Naive thymus-derived CD4-positive, alpha-beta T cell (primary cell): ENCODE measurements at regions of chr7 and their contacts with region 1.

Region 1: GRCh38 chr7:93231799-93232672 is at the start of gene VPS50:
- DNase-seq: peak; percentile 74 to 97 (median 96)
- ATAC-seq: peak; percentile 98
- H3K4me3 ChIP-seq: peak within 1 kb of the TSS; percentile 93
- H3K4me3 Mint-ChIP-seq: peak within 1 kb of the TSS; percentile 91 to 99 (median 97)
- H3K27ac ChIP-seq: peak within 1 kb of the TSS; percentile 89
- H3K27ac Mint-ChIP-seq: peak within 1 kb of the TSS; percentile 93 to 99 (median 98)
- H3K4me1 ChIP-seq: peaks cover 6% of the 10 kb centered on the region in 2 donors
- H3K4me1 Mint-ChIP-seq: peaks cover 5 to 38% (median 21%) of the 10 kb centered on the region in 7 donors
- H3K27me3 ChIP-seq: no peaks in the 10 kb centered on the region
- H3K27me3 Mint-ChIP-seq: peaks cover 0 to 12% (median 0%) of the 10 kb centered on the region in 5 donors
- total RNA-seq, gene VPS50: 19.8 to 44.2 (median 36.8) TPM

Region 2: GRCh38 chr7:91940572-91941341 is 1291.3 kb before region 1 on chr7 and contains the start of gene AKAP9:
- CTCF ChIA-PET with region 1: no interaction called
- POLR2A ChIA-PET with region 1: interaction called, 8 read pairs
- intact Hi-C with region 1: loop called (anchors 2 to 10 kb)
- DNase-seq: peak; percentile 79 to 89 (median 88)
- ATAC-seq: peak; percentile 93
- H3K4me3 ChIP-seq: peak within 1 kb of the TSS; percentile 97
- H3K4me3 Mint-ChIP-seq: peak within 1 kb of the TSS; percentile 85 to 98 (median 92)
- H3K27ac ChIP-seq: peak within 1 kb of the TSS; percentile 93
- H3K27ac Mint-ChIP-seq: peak within 1 kb of the TSS; percentile 90 to 98 (median 95)
- H3K4me1 ChIP-seq: peaks cover 15 to 16% of the 10 kb centered on the region in 2 donors
- H3K4me1 Mint-ChIP-seq: peaks cover 28 to 54% (median 44%) of the 10 kb centered on the region in 7 donors
- H3K27me3 ChIP-seq: no peaks in the 10 kb centered on the region
- H3K27me3 Mint-ChIP-seq: peaks cover 0 to 2% (median 0%) of the 10 kb centered on the region in 5 donors
- total RNA-seq, gene AKAP9: 50.0 to 93.5 (median 66.1) TPM

Region 3: GRCh38 chr7:92447345-92448204 is 784.5 kb before region 1 on chr7 and contains the start of gene GATAD1:
- CTCF ChIA-PET with region 1: no interaction called
- POLR2A ChIA-PET with region 1: interaction called, 3 read pairs
- intact Hi-C with region 1: loop called (anchors 1 to 5 kb)
- DNase-seq: peak in 7 of 9 donors; percentile 64 to 87 (median 84)
- ATAC-seq: peak; percentile 89
- H3K4me3 ChIP-seq: peak within 1 kb of the TSS; percentile 63
- H3K4me3 Mint-ChIP-seq: peak within 1 kb of the TSS; percentile 81 to 97 (median 93)
- H3K27ac ChIP-seq: peak within 1 kb of the TSS; percentile 95
- H3K27ac Mint-ChIP-seq: peak within 1 kb of the TSS; percentile 95 to 99 (median 98)
- H3K4me1 ChIP-seq: peaks cover 9 to 14% of the 10 kb centered on the region in 2 donors
- H3K4me1 Mint-ChIP-seq: peaks cover 6 to 38% (median 17%) of the 10 kb centered on the region in 7 donors
- H3K27me3 ChIP-seq: no peaks in the 10 kb centered on the region
- H3K27me3 Mint-ChIP-seq: peaks cover 0 to 3% (median 0%) of the 10 kb centered on the region in 5 donors
- total RNA-seq, gene GATAD1: 16.4 to 34.7 (median 22.7) TPM

Region 4: GRCh38 chr7:92691578-92691977 is 540.5 kb before region 1 on chr7:
- CTCF ChIA-PET with region 1: no interaction called
- POLR2A ChIA-PET with region 1: no interaction called
- intact Hi-C with region 1: loop called (anchors 2 to 5 kb)
- DNase-seq: peak in 7 of 9 donors; percentile 33 to 59 (median 41)
- ATAC-seq: peak; percentile 93
- H3K4me3 ChIP-seq: no peak overlapping the region
- H3K4me3 Mint-ChIP-seq: peak overlapping the region in 4 of 10 donors; percentile 18 to 50 (median 20)
- H3K27ac ChIP-seq: no peak overlapping the region
- H3K27ac Mint-ChIP-seq: peak overlapping the region in 8 of 9 donors; percentile 1 to 75 (median 58)
- H3K4me1 ChIP-seq: peaks cover 12 to 15% of the 10 kb centered on the region in 2 donors
- H3K4me1 Mint-ChIP-seq: peaks cover 7 to 74% (median 38%) of the 10 kb centered on the region in 7 donors
- H3K27me3 ChIP-seq: no peaks in the 10 kb centered on the region
- H3K27me3 Mint-ChIP-seq: no peaks in the 10 kb centered on the region

Region 5: GRCh38 chr7:93117852-93118530 is 114.0 kb before region 1 on chr7 and contains the start of gene SAMD9:
- CTCF ChIA-PET with region 1: interaction called, 10 read pairs
- POLR2A ChIA-PET with region 1: interaction called, 14 read pairs
- intact Hi-C with region 1: loop called (anchors 1 kb)
- DNase-seq: peak in 8 of 9 donors; percentile 28 to 85 (median 78)
- ATAC-seq: peak; percentile 99
- H3K4me3 ChIP-seq: peak within 1 kb of the TSS; percentile 52
- H3K4me3 Mint-ChIP-seq: peak within 1 kb of the TSS; percentile 78 to 97 (median 92)
- H3K27ac ChIP-seq: peak within 1 kb of the TSS; percentile 82
- H3K27ac Mint-ChIP-seq: peak within 1 kb of the TSS; percentile 85 to 98 (median 93)
- H3K4me1 ChIP-seq: peaks cover 12 to 20% of the 10 kb centered on the region in 2 donors
- H3K4me1 Mint-ChIP-seq: peaks cover 38 to 56% (median 48%) of the 10 kb centered on the region in 7 donors
- H3K27me3 ChIP-seq: no peaks in the 10 kb centered on the region
- H3K27me3 Mint-ChIP-seq: no peaks in the 10 kb centered on the region
- total RNA-seq, gene SAMD9: 20.9 to 61.6 (median 47.8) TPM

Region 6: DNA sequence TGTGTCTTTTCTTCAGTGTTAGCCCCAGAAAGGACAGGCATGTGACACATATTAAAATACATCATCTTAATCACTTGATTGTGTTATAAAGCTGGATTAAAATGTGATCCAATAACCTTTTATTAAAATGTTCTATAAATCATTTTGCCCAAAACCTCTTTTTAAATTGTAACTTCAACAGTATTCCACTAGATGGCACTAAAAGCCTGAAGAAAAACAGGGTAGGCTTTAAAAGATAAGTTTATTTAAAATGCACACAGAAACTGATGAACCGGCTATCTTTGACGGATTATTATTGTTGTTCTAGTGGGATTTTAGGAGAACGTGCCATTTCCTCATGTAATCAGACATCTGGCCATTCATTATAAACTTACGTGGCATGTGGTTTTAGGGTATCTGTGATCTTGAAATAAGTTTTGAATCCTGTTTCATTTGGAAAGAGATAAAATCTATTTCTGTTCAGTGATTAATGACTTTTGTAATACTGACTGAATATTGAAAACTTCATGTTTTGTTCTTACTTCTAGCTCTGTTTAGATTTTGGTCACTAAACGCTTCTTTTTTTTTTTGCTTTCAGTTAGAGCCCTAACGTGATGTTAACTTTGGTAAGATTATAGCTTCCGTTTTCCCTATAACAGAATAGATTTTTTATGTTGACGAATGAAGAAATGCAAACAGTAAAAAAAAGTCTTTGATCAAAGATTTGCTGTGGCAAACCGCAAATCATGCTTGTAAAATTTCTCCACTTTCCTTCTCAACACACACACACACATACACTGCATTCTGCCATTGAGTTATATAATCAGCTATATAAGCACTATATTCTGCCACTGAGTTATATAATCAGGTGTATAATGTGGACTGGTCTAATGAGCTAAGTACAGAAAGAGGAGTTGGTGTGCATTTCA is 13.7 kb after region 1 on chr7:
- CTCF ChIA-PET with region 1: interaction called, 9 read pairs
- POLR2A ChIA-PET with region 1: interaction called, 11 read pairs
- intact Hi-C with region 1: loop called in 1 of 2 experiments (anchors 2 kb)
- DNase-seq: peak in 5 of 9 donors; percentile 30 to 44 (median 33)
- ATAC-seq: peak; percentile 75
- H3K4me3 ChIP-seq: no peak overlapping the region
- H3K4me3 Mint-ChIP-seq: peak overlapping the region in 7 of 10 donors; percentile 10 to 55 (median 38)
- H3K27ac ChIP-seq: no peak overlapping the region
- H3K27ac Mint-ChIP-seq: peak overlapping the region in 2 of 9 donors; percentile 10 to 51
- H3K4me1 ChIP-seq: no peaks in the 10 kb centered on the region
- H3K4me1 Mint-ChIP-seq: peaks cover 0 to 39% (median 19%) of the 10 kb centered on the region in 7 donors
- H3K27me3 ChIP-seq: no peaks in the 10 kb centered on the region
- H3K27me3 Mint-ChIP-seq: no peaks in the 10 kb centered on the region

Region 7: DNA sequence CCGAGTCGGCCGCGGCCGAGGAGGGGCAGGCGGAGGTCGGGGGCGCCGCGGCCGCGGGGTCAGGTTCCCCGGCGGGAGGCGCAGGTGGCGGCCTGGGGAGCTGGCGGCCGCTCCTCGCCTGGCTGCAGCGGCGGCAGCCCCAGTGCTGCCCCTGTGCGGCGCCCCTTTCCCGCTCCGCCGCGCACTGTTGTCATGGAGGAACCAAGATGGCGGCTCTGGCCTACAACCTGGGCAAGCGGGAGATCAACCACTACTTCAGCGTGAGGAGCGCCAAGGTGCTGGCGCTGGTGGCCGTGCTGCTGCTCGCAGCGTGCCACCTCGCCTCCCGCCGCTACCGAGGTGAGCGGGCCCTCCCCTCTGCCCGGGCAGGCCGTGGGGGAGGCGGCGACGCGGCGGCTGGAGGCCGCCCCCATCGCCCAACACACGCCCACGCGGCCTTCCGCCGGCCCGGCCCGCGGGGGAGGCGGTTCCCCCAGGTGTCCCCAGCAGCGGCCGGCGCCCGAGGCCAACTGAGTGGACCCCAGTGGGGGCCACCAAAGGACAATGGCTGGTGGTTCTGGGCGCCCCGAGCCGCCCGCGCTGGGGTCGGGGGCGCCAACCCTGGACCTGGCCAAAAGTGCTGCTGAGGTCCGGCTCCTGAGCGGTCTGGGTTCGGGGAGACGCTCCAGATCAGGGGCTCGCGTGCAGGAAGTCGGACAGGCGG is 1278.0 kb after region 1 on chr7:
- CTCF ChIA-PET with region 1: no interaction called
- POLR2A ChIA-PET with region 1: no interaction called
- intact Hi-C with region 1: loop called (anchors 5 kb)
- DNase-seq: peak; percentile 51 to 75 (median 69)
- ATAC-seq: peak; percentile 90
- H3K4me3 ChIP-seq: peak overlapping the region; percentile 74
- H3K4me3 Mint-ChIP-seq: peak overlapping the region in 7 of 10 donors; percentile 75 to 93 (median 88)
- H3K27ac ChIP-seq: peak overlapping the region; percentile 90
- H3K27ac Mint-ChIP-seq: peak overlapping the region in 7 of 9 donors; percentile 70 to 94 (median 92)
- H3K4me1 ChIP-seq: peaks cover 17 to 22% of the 10 kb centered on the region in 2 donors
- H3K4me1 Mint-ChIP-seq: peaks cover 27 to 52% (median 42%) of the 10 kb centered on the region in 7 donors
- H3K27me3 ChIP-seq: no peaks in the 10 kb centered on the region
- H3K27me3 Mint-ChIP-seq: no peaks in the 10 kb centered on the region